Psoas muscle (tissue), 8 donors: ENCODE measurements at regions of chr16 and their contacts with region 1.

Region 1: DNA sequence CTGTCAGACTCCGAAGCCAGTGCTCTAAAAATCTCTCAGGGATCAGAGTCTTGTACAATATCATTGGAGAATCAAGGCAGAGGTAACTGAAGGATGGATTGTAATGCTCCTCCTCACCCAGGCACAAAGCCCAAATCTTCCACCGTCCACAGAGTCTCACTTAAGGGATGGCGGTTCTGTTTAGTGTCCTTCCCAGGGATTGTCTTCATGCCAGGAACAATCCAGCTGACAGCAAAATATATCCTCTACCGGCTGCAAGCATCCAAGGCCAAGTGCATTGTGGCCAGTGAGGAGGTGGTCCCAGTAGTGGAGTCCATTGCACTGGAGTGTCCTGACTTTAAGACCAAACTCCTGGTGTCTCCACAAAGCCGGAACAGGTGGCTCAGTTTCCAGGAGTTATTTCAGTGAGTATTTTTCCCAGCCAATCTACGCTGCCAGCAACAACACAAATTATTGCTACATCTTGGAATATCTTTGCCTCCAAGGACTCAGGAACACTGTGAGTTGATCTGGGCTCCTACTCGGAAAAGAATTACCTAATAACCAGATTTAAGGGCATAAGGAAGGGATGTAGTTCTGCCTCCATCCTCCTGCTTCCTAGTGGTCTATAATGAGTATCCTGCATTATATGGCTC is 13.9 kb upstream of the ACSM1 start:
- DNase-seq: no peak
- ATAC-seq: no peak
- H3K4me3 ChIP-seq: no peak overlapping the region
- H3K27ac ChIP-seq: no peak overlapping the region
- H3K4me1 ChIP-seq: no peaks in the 10 kb centered on the region
- H3K27me3 ChIP-seq: no peaks in the 10 kb centered on the region
- CTCF ChIP-seq: no peak

Region 2: GRCh38 chr16:20610211-20610891 is 101.0 kb before region 1 on chr16:
- intact Hi-C with region 1: no loop called
- DNase-seq: no peak
- ATAC-seq: no peak
- H3K4me3 ChIP-seq: no peak overlapping the region
- H3K27ac ChIP-seq: no peak overlapping the region
- H3K4me1 ChIP-seq: no peaks in the 10 kb centered on the region
- H3K27me3 ChIP-seq: peaks cover 0 to 3% (median 0%) of the 10 kb centered on the region in 3 donors
- CTCF ChIP-seq: no peak

Region 3: DNA sequence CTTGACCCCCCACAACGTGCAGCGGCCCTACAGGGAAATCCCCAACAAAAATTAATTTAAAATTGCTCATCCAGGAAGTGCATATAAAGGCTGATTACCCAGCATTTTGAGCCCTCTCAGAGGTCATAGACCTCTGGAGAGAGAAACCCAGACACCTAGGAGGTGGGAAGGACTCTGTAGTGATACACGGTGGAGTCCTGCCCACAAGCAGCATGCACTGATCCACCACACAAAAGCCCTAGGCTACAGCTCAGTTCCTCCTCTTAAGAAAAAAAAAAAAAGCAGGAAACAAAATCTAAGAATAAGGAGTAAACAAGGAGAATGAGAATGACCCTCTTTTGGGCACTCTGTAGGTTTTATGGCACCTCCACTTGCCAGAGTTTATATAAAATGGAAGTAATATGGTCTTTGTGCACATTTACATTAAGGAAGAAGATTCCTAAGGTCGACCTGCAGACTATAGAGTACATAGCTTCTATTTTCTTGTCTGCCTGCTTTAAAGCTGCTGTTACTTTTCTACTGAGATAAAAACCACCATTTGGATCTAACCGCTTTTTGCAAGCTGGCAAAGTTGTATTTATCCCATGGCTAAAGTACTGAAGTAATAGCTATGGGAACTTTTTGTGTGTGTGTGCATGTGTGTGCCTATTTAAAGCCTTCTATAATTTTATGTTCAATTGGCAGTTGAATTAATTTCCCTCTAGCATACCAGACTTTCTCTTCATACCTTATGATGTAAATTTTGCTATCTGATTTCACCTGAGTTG is 60.8 kb before region 1 on chr16:
- intact Hi-C with region 1: loop called in 1 of 2 experiments (anchors 10 kb)
- DNase-seq: no peak
- ATAC-seq: no peak
- H3K4me3 ChIP-seq: no peak overlapping the region
- H3K27ac ChIP-seq: no peak overlapping the region
- H3K4me1 ChIP-seq: no peaks in the 10 kb centered on the region
- H3K27me3 ChIP-seq: no peaks in the 10 kb centered on the region
- CTCF ChIP-seq: no peak

Region 4: GRCh38 chr16:20760346-20760745 is 49.0 kb after region 1 on chr16:
- intact Hi-C with region 1: no loop called
- DNase-seq: no peak
- ATAC-seq: no peak
- H3K4me3 ChIP-seq: no peak overlapping the region
- H3K27ac ChIP-seq: no peak overlapping the region
- H3K4me1 ChIP-seq: no peaks in the 10 kb centered on the region
- H3K27me3 ChIP-seq: no peaks in the 10 kb centered on the region
- CTCF ChIP-seq: no peak